ENCODE measurements at regions of chr3 and their contacts with region 1.

Region 1: GRCh38 chr3:72847751-72848702 is at the start of gene SHQ1:
- DNase-seq: peak; percentile 92
- CTCF ChIP-seq: no peak

Region 2: GRCh38 chr3:72756900-72757299 is 91.1 kb before region 1 on chr3:
- CTCF ChIA-PET with region 1: no interaction called
- POLR2A ChIA-PET with region 1: no interaction called
- DNase-seq: peak; percentile 69
- CTCF ChIP-seq: no peak

Region 3: DNA sequence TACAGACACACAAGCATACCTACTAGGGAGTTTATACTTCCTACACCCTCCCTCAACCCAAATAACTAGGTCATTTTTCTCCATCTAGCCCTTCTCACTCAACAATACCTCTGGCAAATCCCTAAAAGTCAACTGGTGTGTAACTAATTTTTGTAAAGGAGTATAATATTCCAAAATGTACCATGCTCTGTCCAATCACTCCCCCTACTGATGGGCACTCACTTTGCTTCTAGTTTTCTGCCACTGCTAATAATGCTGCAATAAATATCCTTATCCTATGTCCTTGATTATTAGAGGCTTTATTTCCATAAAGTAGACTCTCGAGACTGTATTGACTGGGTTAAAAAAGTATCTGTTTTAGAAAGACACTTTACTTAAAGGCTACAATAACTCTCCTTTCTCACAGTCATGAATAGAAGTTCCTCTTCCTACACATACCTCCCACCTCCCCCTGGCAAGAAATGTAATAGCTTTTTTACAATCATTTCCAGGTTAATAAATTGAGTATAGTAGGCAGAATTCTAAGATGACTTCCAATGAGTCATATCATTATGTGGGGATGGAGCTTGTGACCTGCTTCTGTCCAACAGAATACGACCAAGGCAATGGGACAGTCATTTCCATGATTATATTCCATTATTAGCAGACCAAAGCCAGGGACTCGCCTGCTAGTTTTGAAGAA is 29.8 kb before region 1 on chr3:
- CTCF ChIA-PET with region 1: interaction called, 14 read pairs
- POLR2A ChIA-PET with region 1: no interaction called
- DNase-seq: no peak
- CTCF ChIP-seq: peak; percentile 73

Region 4: DNA sequence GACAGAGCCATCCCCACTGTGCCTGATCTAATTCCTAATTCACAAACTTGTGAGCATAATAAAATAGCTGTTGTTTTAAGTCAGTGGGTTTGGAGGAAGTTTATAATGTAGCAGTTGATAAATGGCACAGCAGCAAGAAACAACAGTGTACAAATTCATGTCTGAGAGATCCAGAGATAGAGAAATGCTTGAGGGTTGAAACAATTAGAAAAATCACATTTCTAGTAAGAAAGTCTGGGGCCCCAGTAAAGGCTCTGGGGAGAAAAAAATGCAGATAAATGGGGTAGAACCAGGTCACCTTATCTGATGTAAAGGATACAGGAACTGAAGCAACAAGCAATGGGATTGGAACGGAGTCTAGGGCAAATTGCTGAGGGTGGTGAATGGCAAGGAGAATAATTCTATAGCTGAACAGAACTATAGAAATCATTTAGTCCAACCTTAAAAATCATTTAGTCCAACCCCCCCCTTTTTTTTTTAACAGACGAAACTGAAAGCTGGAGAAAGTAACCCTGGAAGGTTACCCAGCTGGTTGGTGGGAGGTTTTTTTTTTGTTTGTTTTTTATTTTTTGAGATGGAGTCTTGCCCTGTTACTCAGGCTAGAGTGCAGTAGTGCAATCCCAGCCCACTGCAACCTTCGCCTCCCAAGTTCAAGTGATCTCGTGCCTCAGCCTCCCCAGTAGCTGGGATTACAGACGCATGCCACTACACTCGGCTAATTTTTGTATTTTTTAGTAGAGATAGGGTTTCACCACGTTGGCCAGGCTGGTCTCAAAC is 14.5 kb after region 1 on chr3:
- CTCF ChIA-PET with region 1: interaction called, 30 read pairs
- POLR2A ChIA-PET with region 1: no interaction called
- DNase-seq: no peak
- CTCF ChIP-seq: no peak

Region 5: GRCh38 chr3:72872183-72872582 is 24.2 kb after region 1 on chr3:
- CTCF ChIA-PET with region 1: interaction called, 14 read pairs
- POLR2A ChIA-PET with region 1: no interaction called
- DNase-seq: no peak
- CTCF ChIP-seq: no peak